ENCODE measurements at regions of chr9 and their contacts with region 1.

Region 1: DNA sequence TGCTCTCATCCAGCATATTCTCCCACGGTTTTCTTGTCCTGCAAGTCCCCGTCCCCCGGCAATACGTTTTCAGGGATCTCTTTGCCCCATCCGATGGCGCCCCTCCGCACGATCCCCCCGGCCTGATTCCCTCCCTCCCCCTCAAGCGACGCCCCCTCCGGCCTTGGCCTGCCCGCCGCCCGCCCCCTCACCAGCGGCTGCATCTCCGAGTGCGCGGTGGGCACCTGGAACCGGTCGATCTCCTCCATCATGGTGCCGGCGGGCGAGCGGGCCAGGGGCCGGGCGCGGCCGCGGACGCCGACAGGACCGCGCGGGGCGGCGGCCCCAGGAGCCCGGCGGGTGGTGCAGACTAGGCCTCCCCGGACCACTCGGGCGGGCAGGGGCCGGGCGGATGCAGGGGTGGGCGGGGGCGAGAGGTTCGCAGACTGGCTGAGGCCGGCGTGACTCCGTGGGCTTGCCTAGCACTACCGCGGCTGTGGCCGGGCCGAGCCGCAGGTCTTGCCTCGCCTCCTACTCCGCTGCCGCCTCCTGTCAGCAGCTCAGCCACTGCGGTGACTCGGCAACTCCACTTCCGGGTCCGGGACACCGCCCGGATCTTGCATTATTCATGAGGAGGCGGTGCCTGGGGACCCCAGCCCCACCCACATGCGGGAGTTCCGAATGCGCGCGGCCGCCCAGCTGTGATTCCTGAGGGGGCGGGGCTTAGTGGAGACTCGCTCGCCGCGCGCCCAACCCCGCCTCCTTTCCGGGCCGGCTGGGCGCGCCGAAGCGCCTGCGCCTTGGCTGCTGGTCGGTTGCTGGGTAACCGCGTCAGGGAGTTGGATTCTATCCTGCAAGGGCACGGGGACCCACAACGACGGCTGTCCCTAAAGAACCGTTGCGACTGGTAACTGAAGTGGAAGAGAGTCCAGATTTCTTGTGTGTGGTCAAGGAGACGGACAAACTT is at the starts of genes DNAI1 and FAM219A:
- DNase-seq: peak; percentile 99
- ATAC-seq: peak; percentile 95 to 98 (median 98)
- H3K4me3 ChIP-seq: peak within 1 kb of the TSS; percentile 72 to 94 (median 85)
- H3K27ac ChIP-seq: peak within 1 kb of the TSS; percentile 63 to 93 (median 89)
- H3K4me1 ChIP-seq: peaks cover 12 to 52% (median 39%) of the 10 kb centered on the region in 9 donors
- H3K27me3 ChIP-seq: peaks cover 0 to 8% (median 0%) of the 10 kb centered on the region in 7 donors
- CTCF ChIP-seq: no peak
- total RNA-seq, gene DNAI1: 0.09 to 0.18 TPM in 2 of 10 donors, not detected in the others
- total RNA-seq, gene FAM219A: 18.9 to 38.6 (median 27.9) TPM

Region 2: GRCh38 chr9:34522971-34523797 is 64.9 kb after region 1 on chr9 and contains the start of gene ENHO:
- intact Hi-C with region 1: loop called in 1 of 10 experiments (anchors 2 kb)
- DNase-seq: peak; percentile 84 to 91
- ATAC-seq: peak; percentile 97 to 99 (median 98)
- H3K4me3 ChIP-seq: peak within 1 kb of the TSS in 9 of 10 donors; percentile 43 to 55 (median 48)
- H3K27ac ChIP-seq: no peak within 1 kb of the TSS
- H3K4me1 ChIP-seq: peaks cover 0 to 10% (median 8%) of the 10 kb centered on the region in 9 donors
- H3K27me3 ChIP-seq: peaks cover 0 to 25% (median 0%) of the 10 kb centered on the region in 7 donors
- CTCF ChIP-seq: peak in 1 of 9 donors; percentile 11
- total RNA-seq, gene ENHO: 0.32 to 0.64 (median 0.42) TPM in 6 of 10 donors, not detected in the others

Measured in heart right ventricle (tissue), 16 donors.